Right ventricle myocardium superior (tissue), 1 donor: ENCODE measurements at regions of chr10 and their contacts with region 1.

Region 1: DNA sequence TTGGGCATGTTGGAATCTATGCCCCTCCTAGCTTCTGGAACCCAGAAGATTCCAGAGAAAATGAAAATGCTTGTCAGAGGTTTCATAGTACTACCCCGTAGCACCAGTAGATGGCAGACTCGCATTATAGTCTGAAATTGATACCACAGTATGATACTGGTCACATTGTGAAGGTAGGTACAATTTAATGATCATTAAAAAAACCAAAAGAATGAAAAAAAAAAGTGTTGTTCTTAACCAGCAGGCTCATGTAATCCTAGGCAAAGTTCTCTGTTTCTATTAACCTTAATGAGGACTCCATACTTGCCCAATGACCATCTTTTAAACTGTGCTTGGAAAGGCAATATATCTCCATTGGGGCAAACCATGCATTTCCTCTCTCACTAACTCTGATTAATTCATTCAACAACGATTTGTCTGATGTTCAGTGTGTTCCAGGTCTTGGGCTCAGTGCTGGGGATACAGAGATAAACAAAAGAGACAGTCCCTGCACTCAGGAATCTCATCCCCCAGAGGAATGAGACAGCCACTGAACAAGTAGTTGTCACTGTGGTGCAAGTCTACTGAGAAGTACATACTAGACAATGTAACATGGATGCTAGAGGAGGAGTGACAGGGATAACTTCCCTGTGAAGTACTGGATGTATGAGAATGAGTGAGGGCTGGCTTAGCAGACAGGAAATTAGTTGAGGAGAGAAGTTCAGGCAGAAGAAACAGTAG is 223.5 kb upstream of the PHYHIPL start:
- DNase-seq: no peak
- ATAC-seq: peak; percentile 84

Region 2: GRCh38 chr10:58781873-58782488 is 170.9 kb before region 1 on chr10:
- intact Hi-C with region 1: loop called (anchors 10 kb)
- DNase-seq: no peak
- ATAC-seq: peak; percentile 58

Region 3: GRCh38 chr10:59177031-59177797 is 224.3 kb after region 1 on chr10:
- intact Hi-C with region 1: loop called (anchors 2 kb)
- DNase-seq: no peak
- ATAC-seq: no peak